Activated B cell treated with CpG ODN at 0.5 μM for 24 hours (primary cell): ENCODE measurements at regions of chr4 and their contacts with region 1.

Region 1: GRCh38 chr4:171785388-171785787 is 27.8 kb upstream of the GALNTL6 start:
- DNase-seq: no peak
- ATAC-seq: no peak
- H3K4me3 Mint-ChIP-seq: no peak overlapping the region
- H3K27ac Mint-ChIP-seq: no peak overlapping the region
- H3K4me1 Mint-ChIP-seq: peaks cover 3% of the 10 kb centered on the region
- H3K27me3 Mint-ChIP-seq: no peaks in the 10 kb centered on the region
- CTCF ChIP-seq: no peak

Region 2: DNA sequence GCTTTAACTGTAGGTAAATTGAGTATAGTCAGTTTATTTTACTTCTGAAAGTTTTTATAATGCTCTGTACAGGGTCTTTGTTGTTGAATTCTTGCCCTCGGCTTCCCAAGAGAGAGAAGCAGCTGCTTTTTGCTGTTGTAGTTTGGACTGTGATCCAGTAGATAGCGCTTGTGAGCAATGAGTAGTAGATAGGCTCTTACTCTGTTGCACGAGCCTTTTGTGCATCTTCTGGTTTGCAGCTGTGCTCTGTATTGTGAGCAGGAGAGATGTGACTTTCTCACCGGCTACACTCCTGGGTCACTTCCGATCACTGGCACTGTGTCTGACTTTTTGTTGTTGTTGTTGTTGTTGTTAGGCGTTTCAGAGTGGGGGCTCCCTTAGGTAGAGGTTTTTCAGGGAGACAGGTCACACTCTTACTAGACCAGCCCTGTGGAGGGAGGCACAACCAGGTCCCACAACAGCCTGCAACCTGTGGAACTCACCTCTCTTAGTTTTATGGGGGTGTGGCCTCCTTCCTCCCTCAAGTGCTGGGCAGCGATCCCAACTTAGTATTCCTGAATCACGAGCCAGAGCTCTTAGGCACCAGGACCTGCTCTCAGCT is 794.3 kb before region 1 on chr4:
- CTCF ChIA-PET with region 1: no interaction called
- POLR2A ChIA-PET with region 1: no interaction called
- intact Hi-C with region 1: loop called (anchors 10 kb)
- DNase-seq: no peak
- ATAC-seq: no peak
- H3K4me3 Mint-ChIP-seq: no peak overlapping the region
- H3K27ac Mint-ChIP-seq: no peak overlapping the region
- H3K4me1 Mint-ChIP-seq: no peaks in the 10 kb centered on the region
- H3K27me3 Mint-ChIP-seq: no peaks in the 10 kb centered on the region
- CTCF ChIP-seq: no peak

Region 3: DNA sequence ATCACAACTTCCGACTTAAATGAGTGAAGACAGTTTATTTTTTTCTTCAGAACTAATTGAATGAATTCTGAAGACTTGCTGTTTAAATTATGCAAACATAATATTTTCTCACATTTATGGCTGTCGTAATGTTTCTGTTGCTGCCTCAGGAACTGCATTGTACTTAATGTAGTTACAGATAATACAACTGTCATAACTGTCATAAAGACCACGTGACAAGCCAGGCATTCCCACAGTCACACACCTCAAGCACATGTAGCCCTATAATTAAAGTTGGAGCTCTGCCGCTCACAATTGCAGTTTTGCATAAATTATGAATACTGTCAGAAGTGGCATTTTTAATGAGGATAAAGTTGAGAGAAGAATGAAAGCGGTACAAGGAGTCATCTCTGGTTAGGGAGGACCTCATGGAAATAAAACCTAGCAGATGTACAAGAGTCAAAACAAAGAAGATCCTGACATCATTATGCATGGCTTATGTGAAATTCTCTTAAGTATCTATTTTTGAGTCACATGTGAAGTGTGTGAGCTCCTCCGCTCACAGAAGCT is 10.7 kb before region 1 on chr4:
- CTCF ChIA-PET with region 1: no interaction called
- POLR2A ChIA-PET with region 1: no interaction called
- intact Hi-C with region 1: no loop called
- DNase-seq: no peak
- ATAC-seq: no peak
- H3K4me3 Mint-ChIP-seq: no peak overlapping the region
- H3K27ac Mint-ChIP-seq: no peak overlapping the region
- H3K4me1 Mint-ChIP-seq: no peaks in the 10 kb centered on the region
- H3K27me3 Mint-ChIP-seq: peaks cover 3% of the 10 kb centered on the region
- CTCF ChIP-seq: no peak